ENCODE measurements at regions of chr20 and their contacts with region 1.

Region 1: GRCh38 chr20:17747431-17747867 is 47.7 kb downstream of the BANF2 start:
- DNase-seq: peak; percentile 77
- H3K4me3 ChIP-seq: no peak overlapping the region
- H3K27ac ChIP-seq: no peak overlapping the region
- H3K4me1 ChIP-seq: peaks cover 12% of the 10 kb centered on the region
- H3K27me3 ChIP-seq: no peaks in the 10 kb centered on the region
- CTCF ChIP-seq: peak in 1 of 2 donors; percentile 6

Region 2: DNA sequence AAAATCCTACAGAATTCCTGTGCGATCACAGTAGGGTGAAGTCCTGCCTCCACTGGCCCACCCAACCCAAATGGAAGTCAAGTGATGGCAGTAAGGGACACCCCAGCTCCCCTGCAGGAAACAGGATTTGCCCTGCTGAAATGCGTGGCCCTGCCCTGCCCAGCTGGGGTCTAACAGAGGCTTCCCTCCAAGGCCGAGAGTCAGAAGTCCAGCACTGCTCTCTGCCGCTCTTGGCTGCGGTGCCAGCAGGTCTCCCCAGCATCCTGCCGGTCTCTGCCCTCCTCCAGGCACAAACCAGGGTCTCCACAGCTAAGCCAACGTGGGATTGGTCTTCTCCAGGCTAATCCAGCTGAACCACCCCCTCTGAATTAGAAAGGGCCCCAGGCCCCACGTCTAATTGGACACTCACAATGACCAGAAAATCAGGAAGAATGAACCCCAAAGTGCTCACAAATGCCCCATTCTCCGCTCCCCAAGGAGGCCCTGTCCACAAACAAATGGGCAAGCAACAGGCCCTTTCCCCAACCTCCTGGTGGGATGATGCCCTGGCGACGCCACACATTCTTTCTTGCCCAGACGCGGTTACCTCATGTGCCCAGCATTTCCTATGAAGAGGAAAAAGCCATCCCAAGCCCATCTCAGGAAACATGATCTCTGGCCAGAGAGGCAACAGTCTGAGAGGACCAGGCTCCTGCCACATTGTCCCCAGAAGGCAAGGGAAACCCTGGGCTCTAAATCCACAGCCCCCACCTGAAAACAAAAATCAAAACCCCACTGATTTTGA is 69.5 kb after region 1 on chr20:
- CTCF ChIA-PET with region 1: no interaction called
- dilution Hi-C with region 1: loop called (anchors 5 kb)
- in situ Hi-C with region 1: no loop called
- intact Hi-C with region 1: no loop called
- DNase-seq: no peak
- H3K4me3 ChIP-seq: no peak overlapping the region
- H3K27ac ChIP-seq: no peak overlapping the region
- H3K4me1 ChIP-seq: no peaks in the 10 kb centered on the region
- H3K27me3 ChIP-seq: no peaks in the 10 kb centered on the region
- CTCF ChIP-seq: no peak

Measured in mammary epithelial cell (primary cell).